AG04449 (cell line): ENCODE measurements at regions of chr3 and their contacts with region 1.

Region 1: GRCh38 chr3:8441969-8442559 is 59.6 kb upstream of the LMCD1 start:
- DNase-seq: no peak
- H3K4me3 ChIP-seq: no peak overlapping the region
- CTCF ChIP-seq: peak; percentile 58

Region 2: DNA sequence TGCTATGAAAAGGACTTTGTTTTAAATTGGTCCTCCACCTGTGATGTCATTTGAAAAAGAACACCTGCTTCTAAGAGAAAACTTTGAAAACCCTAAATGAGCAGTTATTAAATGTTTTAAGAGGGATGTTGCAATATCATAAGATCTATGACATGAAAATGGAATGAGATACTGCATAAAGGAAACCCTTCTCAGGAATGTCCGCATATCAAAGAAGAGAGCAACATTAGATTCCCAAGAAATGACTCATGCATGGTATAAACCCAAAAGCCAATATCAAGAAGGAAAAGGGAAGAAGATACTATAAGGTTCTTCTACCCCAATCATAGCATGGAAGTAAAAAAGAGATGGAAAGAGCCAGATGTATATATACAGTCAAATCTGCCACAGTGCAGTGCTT is 567.9 kb before region 1 on chr3:
- CTCF ChIA-PET with region 1: no interaction called
- POLR2A ChIA-PET with region 1: no interaction called
- DNase-seq: no peak
- H3K4me3 ChIP-seq: no peak overlapping the region
- CTCF ChIP-seq: no peak

Region 3: DNA sequence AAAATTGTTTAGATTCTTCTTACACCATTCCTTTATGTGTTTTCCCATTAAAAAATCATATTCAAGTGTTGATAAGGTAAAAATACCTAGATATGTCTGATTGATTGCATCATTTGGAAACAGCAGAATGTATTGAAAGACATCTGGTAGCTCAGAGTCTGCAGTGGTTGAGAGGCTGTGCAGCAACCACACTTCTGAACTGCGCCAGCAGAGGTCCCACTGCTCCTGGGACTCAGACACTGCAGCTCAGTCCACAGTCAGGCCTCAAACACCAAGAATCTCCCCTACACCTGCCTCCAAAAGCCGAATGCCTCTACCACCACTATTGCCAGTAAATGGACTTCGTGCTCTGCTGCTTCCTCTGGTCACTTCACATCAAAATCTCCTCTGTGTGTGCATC is 117.3 kb before region 1 on chr3:
- CTCF ChIA-PET with region 1: no interaction called
- POLR2A ChIA-PET with region 1: no interaction called
- DNase-seq: no peak
- H3K4me3 ChIP-seq: no peak overlapping the region
- CTCF ChIP-seq: peak; percentile 75

Region 4: DNA sequence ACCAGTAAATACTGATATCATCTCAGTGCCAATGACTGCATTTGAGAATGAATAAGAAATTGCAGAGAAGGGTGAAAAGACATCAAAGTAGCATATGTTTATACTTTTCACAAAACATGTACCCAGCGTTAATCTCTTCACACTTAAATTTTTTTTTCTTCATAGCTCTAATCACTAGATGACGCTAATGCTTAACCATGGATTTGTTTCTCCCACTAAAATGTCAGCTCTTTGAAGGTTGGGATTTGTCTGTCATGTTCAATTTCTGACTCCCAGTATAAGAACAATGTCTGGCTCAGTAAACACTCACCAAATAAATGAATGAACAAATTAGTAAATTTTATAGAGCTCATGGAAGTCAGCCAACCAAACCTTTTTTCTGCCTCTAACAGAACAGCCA is 18.8 kb before region 1 on chr3:
- CTCF ChIA-PET with region 1: interaction called, 30 read pairs
- POLR2A ChIA-PET with region 1: no interaction called
- DNase-seq: no peak
- H3K4me3 ChIP-seq: no peak overlapping the region
- CTCF ChIP-seq: no peak

Region 5: DNA sequence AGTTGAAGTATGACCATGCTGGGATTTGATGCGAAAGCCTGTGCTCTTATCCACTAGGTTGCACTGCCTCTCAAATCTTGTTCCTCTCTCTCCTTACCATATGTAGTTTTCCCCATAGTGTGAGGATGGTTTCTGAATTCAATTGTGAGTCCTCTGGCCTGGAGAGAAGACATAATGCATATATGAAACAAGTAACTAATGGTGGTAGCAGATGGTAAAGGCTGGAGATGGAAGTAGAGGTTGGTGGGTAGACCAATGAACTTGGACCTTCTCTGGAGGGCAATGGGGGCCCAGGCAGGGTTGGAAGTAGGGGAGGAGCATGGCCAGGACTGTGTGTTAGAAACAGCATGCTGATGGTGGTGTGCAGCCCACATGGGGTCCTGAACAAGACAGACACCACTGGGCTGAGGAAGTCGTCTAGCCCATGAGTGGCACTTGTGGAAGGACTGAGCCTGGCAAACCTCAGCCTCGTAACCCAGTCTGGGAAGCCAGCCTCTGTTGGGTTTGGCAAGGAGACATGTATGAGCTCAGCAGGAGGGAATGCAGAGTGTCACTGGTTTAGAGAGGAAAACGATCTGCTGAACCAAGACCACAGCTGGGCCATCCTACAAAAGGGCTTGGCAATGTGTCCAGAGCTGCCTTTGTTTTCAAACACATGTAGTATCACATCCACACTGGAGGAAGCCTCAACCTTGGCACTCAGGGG is 41.0 kb after region 1 on chr3:
- CTCF ChIA-PET with region 1: interaction called, 10 read pairs
- POLR2A ChIA-PET with region 1: interaction called, 3 read pairs
- DNase-seq: peak; percentile 96
- H3K4me3 ChIP-seq: no peak overlapping the region
- CTCF ChIP-seq: no peak

Region 6: DNA sequence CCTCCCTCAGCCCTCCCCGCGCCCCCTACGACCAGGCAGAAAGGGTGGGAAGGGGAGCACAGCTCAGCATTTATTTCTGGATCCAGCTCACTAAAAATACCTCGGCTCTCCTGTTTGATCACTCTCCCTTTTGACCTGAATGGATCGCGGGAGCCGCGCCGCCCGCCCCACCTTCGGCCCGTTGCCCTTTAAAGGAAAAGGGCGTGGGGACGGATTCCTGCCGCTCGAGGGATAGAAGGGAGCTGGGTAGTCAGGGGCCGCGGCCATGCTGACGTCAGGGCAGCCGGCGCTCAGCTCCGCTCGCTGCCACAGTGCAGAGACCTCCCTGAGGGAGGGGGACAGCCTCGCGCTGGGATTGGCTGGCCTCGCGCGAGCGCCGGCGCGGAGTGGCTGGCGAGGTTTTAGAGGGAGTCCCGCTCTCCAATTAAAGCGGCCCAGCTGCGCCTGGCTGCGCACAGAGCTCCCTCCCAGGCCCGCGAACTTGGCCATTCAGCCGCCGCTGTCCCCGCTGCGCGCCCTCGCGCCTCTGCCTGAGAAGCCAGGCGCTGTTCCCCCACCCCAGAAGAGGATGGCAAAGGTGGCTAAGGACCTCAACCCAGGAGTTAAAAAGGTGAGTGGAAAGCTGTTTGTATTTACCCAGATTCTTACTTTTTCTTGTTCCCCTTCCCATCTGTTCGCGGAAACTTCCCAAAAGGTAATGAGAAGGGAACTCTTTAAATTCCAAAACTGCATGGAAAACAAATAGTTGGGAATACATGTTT is 59.5 kb after region 1 on chr3 and contains the start of gene LMCD1:
- CTCF ChIA-PET with region 1: interaction called, 13 read pairs
- POLR2A ChIA-PET with region 1: interaction called, 6 read pairs
- DNase-seq: peak; percentile 80
- H3K4me3 ChIP-seq: peak within 1 kb of the TSS; percentile 62
- CTCF ChIP-seq: peak; percentile 53

Region 7: GRCh38 chr3:8593026-8593827 is 151.2 kb after region 1 on chr3:
- CTCF ChIA-PET with region 1: interaction called, 19 read pairs
- POLR2A ChIA-PET with region 1: no interaction called
- DNase-seq: no peak
- H3K4me3 ChIP-seq: no peak overlapping the region
- CTCF ChIP-seq: no peak

Region 8: GRCh38 chr3:8607234-8608040 is 165.4 kb after region 1 on chr3:
- CTCF ChIA-PET with region 1: interaction called, 166 read pairs
- POLR2A ChIA-PET with region 1: no interaction called
- DNase-seq: no peak
- H3K4me3 ChIP-seq: no peak overlapping the region
- CTCF ChIP-seq: peak; percentile 73

Region 9: GRCh38 chr3:8663177-8664061 is 221.4 kb after region 1 on chr3:
- CTCF ChIA-PET with region 1: interaction called, 14 read pairs
- POLR2A ChIA-PET with region 1: interaction called, 4 read pairs
- DNase-seq: no peak
- H3K4me3 ChIP-seq: no peak overlapping the region
- CTCF ChIP-seq: peak; percentile 62